Natural killer cell (primary cell): ENCODE measurements at regions of chr1 and their contacts with region 1.

Region 1: GRCh38 chr1:159817276-159818041 is 9.2 kb upstream of the SLAMF8 start:
- DNase-seq: no peak
- ATAC-seq: no peak
- H3K4me3 ChIP-seq: no peak overlapping the region
- H3K4me3 Mint-ChIP-seq: no peak overlapping the region
- H3K27ac ChIP-seq: no peak overlapping the region
- H3K27ac Mint-ChIP-seq: peak overlapping the region in 1 of 2 donors; percentile 72
- H3K4me1 ChIP-seq: peaks cover 25% of the 10 kb centered on the region
- H3K4me1 Mint-ChIP-seq: peaks cover 57% of the 10 kb centered on the region in 2 donors
- H3K27me3 ChIP-seq: no peaks in the 10 kb centered on the region
- H3K27me3 Mint-ChIP-seq: peaks cover 0 to 8% of the 10 kb centered on the region in 2 donors
- CTCF ChIP-seq: no peak

Region 2: GRCh38 chr1:159803956-159804689 is 13.3 kb before region 1 on chr1:
- intact Hi-C with region 1: loop called (anchors 1 kb)
- DNase-seq: peak in 1 of 2 donors; percentile 20
- ATAC-seq: peak; percentile 27 to 36 (median 33)
- H3K4me3 ChIP-seq: peak overlapping the region; percentile 49
- H3K4me3 Mint-ChIP-seq: peak overlapping the region; percentile 96
- H3K27ac ChIP-seq: peak overlapping the region; percentile 26
- H3K27ac Mint-ChIP-seq: peak overlapping the region; percentile 87 to 90
- H3K4me1 ChIP-seq: peaks cover 67% of the 10 kb centered on the region
- H3K4me1 Mint-ChIP-seq: peaks cover 87 to 90% of the 10 kb centered on the region in 2 donors
- H3K27me3 ChIP-seq: no peaks in the 10 kb centered on the region
- H3K27me3 Mint-ChIP-seq: peaks cover 0 to 11% of the 10 kb centered on the region in 2 donors
- CTCF ChIP-seq: no peak

Region 3: GRCh38 chr1:160018900-160019299 is 201.4 kb after region 1 on chr1:
- intact Hi-C with region 1: no loop called
- DNase-seq: no peak
- ATAC-seq: no peak
- H3K4me3 ChIP-seq: no peak overlapping the region
- H3K4me3 Mint-ChIP-seq: no peak overlapping the region
- H3K27ac ChIP-seq: no peak overlapping the region
- H3K27ac Mint-ChIP-seq: no peak overlapping the region
- H3K4me1 ChIP-seq: no peaks in the 10 kb centered on the region
- H3K4me1 Mint-ChIP-seq: no peaks in the 10 kb centered on the region
- H3K27me3 ChIP-seq: no peaks in the 10 kb centered on the region
- H3K27me3 Mint-ChIP-seq: peaks cover 0 to 10% of the 10 kb centered on the region in 2 donors
- CTCF ChIP-seq: no peak